ENCODE measurements at regions of chr16 and their contacts with region 1.

Region 1: DNA sequence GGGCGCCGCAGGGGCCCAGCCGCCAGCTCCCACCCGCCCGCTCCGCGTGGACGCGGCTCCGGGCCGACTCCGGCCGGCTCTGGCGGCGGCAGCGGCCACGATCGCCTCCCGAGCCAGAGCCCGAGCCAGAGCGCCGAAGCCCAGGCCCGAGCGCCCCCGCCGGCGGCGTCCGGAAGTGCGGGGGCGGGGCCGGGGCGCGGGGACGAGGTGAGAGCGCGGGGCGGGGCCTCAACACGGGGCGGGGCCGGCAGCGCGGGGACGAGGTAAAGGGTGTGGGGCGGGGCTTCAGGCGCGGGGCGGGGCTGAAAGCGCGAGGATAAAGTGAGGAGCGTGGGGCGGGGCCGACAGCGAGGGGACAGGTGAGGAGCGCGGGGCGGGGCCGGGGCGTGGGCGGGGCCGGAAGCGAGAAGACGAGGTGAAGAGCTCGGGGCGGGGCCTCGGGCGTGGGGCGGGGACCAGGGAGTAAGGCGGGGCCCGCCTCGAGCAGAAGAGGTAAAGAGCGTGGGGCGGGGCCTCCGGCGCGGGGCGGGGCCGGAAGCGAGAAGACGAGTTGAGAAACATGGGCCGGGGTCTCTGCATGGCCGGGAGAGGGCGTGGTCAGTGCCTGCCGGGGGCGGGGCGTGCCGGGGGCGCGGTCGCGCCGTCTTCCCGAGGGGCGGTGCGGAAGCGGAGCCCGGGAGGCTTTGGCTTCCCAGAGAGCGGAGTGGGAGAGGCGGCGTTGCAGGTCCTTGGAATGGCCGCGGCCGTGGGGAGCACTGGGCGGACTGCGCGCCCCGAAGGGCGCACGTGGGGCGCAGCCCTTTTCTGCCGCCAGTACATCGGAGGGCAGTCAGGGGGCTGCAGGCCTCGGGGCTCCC is at the start of gene AXIN1:
- DNase-seq: peak; percentile 100
- ATAC-seq: peak; percentile 89
- H3K4me3 Mint-ChIP-seq: peak within 1 kb of the TSS; percentile 85
- H3K27ac Mint-ChIP-seq: peak within 1 kb of the TSS; percentile 77
- H3K4me1 Mint-ChIP-seq: peaks cover 32% of the 10 kb centered on the region
- H3K27me3 Mint-ChIP-seq: no peaks in the 10 kb centered on the region
- CTCF ChIP-seq: no peak
- total RNA-seq, gene AXIN1: 27.9 and 30.6 TPM in 2 replicates

Region 2: DNA sequence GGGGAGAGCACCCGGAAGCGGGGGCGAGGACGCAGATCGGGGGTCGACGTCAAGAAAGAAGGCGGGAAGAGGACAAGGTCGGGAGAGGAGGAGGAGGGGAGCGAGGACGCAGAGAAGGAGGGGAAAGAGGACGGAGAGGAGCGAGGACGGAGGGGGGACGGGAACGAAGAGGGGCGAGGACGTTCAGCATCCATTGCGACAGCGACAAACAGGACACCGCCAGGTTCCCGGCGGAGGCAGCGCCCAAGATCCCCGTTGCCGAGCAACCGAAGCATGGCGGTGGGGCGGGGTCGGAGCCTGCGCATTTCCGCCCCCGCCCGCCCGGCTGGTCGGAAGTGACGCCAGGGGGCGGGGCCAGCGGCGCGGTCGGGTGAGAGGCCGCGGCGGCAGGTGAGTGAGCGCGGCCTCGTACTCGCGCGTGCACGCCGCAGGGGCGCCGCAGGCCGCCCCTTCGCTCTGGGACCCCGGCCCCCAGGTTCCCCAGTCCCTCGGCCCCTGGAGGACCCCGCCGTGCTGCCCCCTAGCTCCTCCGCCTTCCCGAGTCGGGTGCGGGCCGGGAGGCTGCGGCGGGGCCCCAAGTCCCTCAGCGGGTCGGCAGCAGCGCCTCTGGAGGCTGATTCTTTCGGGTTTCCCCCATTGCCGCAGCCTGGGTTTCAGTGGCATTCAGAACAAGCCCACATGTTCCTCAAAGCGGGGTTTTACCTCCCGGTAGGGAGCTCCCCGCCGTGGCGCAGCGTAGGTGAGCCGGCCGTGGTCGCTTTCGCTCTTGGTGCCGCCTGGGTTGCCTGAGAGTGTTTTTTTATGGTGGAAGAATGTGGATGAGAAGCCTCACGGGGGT is 118.1 kb before region 1 on chr16 and contains the start of gene FAM234A:
- CTCF ChIA-PET with region 1: no interaction called
- POLR2A ChIA-PET with region 1: interaction called, 27 read pairs
- intact Hi-C with region 1: loop called (anchors 1 kb)
- DNase-seq: peak; percentile 98
- ATAC-seq: peak; percentile 85
- H3K4me3 Mint-ChIP-seq: peak within 1 kb of the TSS; percentile 98
- H3K27ac Mint-ChIP-seq: peak within 1 kb of the TSS; percentile 99
- H3K4me1 Mint-ChIP-seq: peaks cover 18% of the 10 kb centered on the region
- H3K27me3 Mint-ChIP-seq: no peaks in the 10 kb centered on the region
- CTCF ChIP-seq: no peak
- total RNA-seq, gene FAM234A: 45.9 and 49.6 TPM in 2 replicates

Region 3: GRCh38 chr16:370443-370842 is 17.7 kb after region 1 on chr16 and contains the start of gene MRPL28:
- CTCF ChIA-PET with region 1: no interaction called
- POLR2A ChIA-PET with region 1: interaction called, 10 read pairs
- intact Hi-C with region 1: loop called (anchors 1 kb)
- DNase-seq: peak; percentile 88
- ATAC-seq: peak; percentile 99
- H3K4me3 Mint-ChIP-seq: peak within 1 kb of the TSS; percentile 93
- H3K27ac Mint-ChIP-seq: peak within 1 kb of the TSS; percentile 91
- H3K4me1 Mint-ChIP-seq: peaks cover 13% of the 10 kb centered on the region
- H3K27me3 Mint-ChIP-seq: no peaks in the 10 kb centered on the region
- CTCF ChIP-seq: no peak
- total RNA-seq, gene MRPL28: 82.4 and 87.3 TPM in 2 replicates

Region 4: DNA sequence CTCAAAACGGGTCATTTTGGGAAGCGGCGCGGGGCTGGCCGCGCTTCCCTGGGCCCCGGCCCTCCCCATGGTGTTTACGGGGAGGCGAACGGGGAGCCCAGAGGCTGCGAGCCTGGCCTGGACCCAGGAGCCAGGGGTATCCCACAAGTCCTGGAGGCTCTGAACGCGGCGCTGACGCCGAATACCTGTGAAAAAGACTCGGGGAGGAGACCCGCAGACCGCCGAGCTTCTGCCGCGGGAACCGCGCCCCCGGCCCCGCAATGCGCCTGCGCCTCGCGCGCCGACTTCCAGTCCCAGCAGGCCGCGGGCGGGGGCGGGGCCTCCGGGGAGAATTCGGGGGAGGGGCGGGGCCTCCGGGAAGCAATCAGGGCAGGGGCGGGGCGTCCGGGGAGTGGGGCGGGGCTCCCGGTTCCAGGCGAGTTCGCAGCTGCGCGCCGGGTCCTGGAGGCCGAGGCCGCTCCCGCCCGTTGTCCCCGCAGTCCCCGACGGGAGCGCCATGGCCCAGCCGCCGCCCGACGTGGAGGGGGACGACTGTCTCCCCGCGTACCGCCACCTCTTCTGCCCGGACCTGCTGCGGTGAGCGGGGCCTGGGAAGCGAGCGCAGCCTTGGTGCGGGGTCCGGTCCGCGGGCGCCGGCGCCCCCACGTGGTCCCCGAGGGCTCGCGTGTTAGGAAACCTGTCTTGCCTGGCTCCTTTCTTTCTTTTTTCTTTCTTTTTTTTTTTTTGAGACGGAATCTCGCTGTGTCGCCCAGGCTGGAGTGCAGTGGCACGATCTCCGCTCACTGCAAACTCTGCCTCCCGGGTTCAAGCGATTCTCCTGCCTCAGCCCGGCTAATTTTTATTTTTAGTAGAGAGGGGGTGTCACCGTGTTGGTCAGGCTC is 48.9 kb after region 1 on chr16 and contains the start of gene DECR2:
- CTCF ChIA-PET with region 1: interaction called, 3 read pairs
- POLR2A ChIA-PET with region 1: interaction called, 20 read pairs
- intact Hi-C with region 1: loop called (anchors 1 kb)
- DNase-seq: peak; percentile 95
- ATAC-seq: peak; percentile 86
- H3K4me3 Mint-ChIP-seq: peak within 1 kb of the TSS; percentile 93
- H3K27ac Mint-ChIP-seq: peak within 1 kb of the TSS; percentile 98
- H3K4me1 Mint-ChIP-seq: peaks cover 24% of the 10 kb centered on the region
- H3K27me3 Mint-ChIP-seq: no peaks in the 10 kb centered on the region
- CTCF ChIP-seq: no peak
- total RNA-seq, gene DECR2: 4.4 and 6.7 TPM in 2 replicates

Region 5: DNA sequence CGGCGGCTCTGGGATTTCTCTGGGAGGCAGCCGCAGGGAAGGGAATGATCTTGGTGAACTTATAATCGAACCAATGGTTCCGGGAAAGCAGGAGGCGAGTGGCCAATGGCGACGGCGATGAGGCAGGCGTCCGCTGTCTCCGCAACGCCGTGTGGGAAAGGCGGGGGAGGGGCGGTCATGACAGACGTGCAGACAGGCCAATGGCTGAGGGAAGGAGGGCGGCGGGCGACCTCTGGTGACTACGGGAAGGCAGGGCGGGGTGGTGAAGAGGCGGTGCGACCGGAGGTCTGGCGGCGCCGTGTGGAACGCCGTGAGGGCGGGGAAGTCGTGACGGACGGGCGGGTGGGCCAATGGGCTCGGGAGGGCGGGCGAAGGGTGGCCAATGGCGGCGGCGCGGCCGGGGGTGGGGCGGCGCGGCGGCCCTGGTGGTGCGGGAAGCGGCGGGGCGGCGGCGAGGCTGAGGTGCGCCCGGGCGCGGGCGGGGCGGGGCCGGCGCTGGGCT is 236.9 kb after region 1 on chr16 and contains the start of gene RAB40C:
- CTCF ChIA-PET with region 1: no interaction called
- POLR2A ChIA-PET with region 1: interaction called, 3 read pairs
- intact Hi-C with region 1: loop called (anchors 1 kb)
- DNase-seq: peak; percentile 96
- ATAC-seq: peak; percentile 86
- H3K4me3 Mint-ChIP-seq: peak within 1 kb of the TSS; percentile 99
- H3K27ac Mint-ChIP-seq: peak within 1 kb of the TSS; percentile 100
- H3K4me1 Mint-ChIP-seq: peaks cover 42% of the 10 kb centered on the region
- H3K27me3 Mint-ChIP-seq: no peaks in the 10 kb centered on the region
- CTCF ChIP-seq: no peak
- total RNA-seq, gene RAB40C: 10.5 and 13.1 TPM in 2 replicates

Region 6: GRCh38 chr16:1010251-1010650 is 657.5 kb after region 1 on chr16:
- CTCF ChIA-PET with region 1: no interaction called
- POLR2A ChIA-PET with region 1: no interaction called
- intact Hi-C with region 1: no loop called
- DNase-seq: no peak
- ATAC-seq: no peak
- H3K4me3 Mint-ChIP-seq: no peak overlapping the region
- H3K27ac Mint-ChIP-seq: no peak overlapping the region
- H3K4me1 Mint-ChIP-seq: no peaks in the 10 kb centered on the region
- H3K27me3 Mint-ChIP-seq: peaks cover 9% of the 10 kb centered on the region
- CTCF ChIP-seq: no peak

Measured in activated B cell treated with CpG ODN at 0.5 μM for 24 hours (primary cell).